ENCODE measurements at regions of chr4 and their contacts with region 1.

Region 1: DNA sequence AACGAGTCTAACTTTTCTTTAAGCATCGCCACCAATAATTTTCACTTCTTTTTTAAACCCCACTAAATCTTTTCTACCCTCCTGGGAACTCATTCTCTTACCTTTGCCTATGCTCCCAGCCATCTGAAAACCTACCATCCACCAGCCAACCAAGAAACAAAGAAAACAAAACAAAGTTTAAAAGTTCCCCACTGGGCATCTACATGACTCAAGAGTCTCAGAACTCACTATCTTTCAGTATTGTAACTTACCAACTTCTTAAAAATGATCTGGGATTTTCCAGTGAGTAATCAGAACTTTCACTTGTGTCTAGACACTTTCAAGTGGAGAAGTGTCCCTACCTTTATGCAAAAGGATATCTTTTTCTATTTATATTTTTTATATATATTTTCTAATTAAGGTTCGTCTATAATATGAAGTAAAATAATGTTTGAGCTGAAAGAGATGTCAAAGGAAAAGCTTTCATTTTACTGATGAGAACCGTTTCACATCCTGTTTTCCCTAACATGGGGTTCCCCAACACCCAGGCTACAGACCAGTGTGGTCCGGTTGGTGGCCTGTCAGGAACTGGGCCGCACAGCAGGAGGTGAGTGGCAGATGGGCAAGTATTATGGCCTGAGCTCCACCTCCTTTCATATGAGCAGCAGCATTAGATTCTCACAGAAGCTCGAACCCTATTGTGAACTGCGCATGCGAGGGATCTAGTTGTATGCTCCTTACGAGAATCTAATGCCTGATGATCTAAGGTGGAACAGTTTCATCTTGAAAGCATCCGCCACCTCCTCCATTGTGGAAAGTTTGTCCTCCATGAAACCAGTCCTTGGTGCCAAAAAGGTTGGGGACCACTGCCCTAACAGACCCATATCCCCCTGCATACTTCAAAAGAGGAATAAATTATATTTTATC is 9.8 kb upstream of the TIGD2 start:
- DNase-seq: no peak
- H3K4me3 Mint-ChIP-seq: no peak overlapping the region
- H3K27ac Mint-ChIP-seq: peak overlapping the region; percentile 10
- H3K4me1 Mint-ChIP-seq: peaks cover 15% of the 10 kb centered on the region
- H3K27me3 Mint-ChIP-seq: peaks cover 2% of the 10 kb centered on the region

Region 2: GRCh38 chr4:88613417-88613875 is 488.1 kb before region 1 on chr4:
- intact Hi-C with region 1: loop called (anchors 10 kb)
- DNase-seq: peak; percentile 20
- H3K4me3 Mint-ChIP-seq: peak overlapping the region; percentile 55
- H3K27ac Mint-ChIP-seq: peak overlapping the region; percentile 77
- H3K4me1 Mint-ChIP-seq: peaks cover 61% of the 10 kb centered on the region
- H3K27me3 Mint-ChIP-seq: no peaks in the 10 kb centered on the region

Region 3: DNA sequence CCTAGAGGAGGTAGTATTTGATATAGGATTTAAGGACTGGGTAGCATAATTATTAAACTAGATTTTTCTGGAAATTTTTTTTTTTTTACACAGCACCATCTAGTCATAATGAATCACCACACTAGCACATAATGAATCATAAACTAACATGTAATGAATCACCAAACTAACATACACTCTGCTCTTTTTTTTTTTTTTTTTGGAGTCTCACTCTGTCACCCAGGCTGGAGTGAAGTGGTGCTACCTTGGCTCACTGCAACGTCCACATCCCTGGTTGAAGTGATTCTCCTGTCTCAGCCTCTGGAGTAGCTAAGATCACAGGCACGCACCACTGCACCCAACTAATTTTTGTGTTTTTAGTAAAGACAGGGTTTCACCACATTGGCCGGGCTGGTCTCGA is 137.1 kb before region 1 on chr4:
- intact Hi-C with region 1: loop called (anchors 10 kb)
- DNase-seq: no peak
- H3K4me3 Mint-ChIP-seq: no peak overlapping the region
- H3K27ac Mint-ChIP-seq: no peak overlapping the region
- H3K4me1 Mint-ChIP-seq: peaks cover 18% of the 10 kb centered on the region
- H3K27me3 Mint-ChIP-seq: peaks cover 9% of the 10 kb centered on the region

Region 4: GRCh38 chr4:89077761-89078160 is 23.7 kb before region 1 on chr4:
- intact Hi-C with region 1: loop called (anchors 1 kb)
- DNase-seq: no peak
- H3K4me3 Mint-ChIP-seq: no peak overlapping the region
- H3K27ac Mint-ChIP-seq: no peak overlapping the region
- H3K4me1 Mint-ChIP-seq: peaks cover 6% of the 10 kb centered on the region
- H3K27me3 Mint-ChIP-seq: no peaks in the 10 kb centered on the region

Measured in activated T-helper 1 cell treated with anti-CD3 and anti-CD28 coated beads, Interleukin-12 subunit alpha, Interleukin-12 subunit beta, Interleukin-2, Interleukin-4 antibody, amounts not matched to agents 30 ng/mL and 10 ng/mL and 1 ng/mL, durations not matched to agents 14 hours and 24 hours and 36 hours (primary cell).